ENCODE measurements at regions of chr10 and their contacts with region 1.

Region 1: DNA sequence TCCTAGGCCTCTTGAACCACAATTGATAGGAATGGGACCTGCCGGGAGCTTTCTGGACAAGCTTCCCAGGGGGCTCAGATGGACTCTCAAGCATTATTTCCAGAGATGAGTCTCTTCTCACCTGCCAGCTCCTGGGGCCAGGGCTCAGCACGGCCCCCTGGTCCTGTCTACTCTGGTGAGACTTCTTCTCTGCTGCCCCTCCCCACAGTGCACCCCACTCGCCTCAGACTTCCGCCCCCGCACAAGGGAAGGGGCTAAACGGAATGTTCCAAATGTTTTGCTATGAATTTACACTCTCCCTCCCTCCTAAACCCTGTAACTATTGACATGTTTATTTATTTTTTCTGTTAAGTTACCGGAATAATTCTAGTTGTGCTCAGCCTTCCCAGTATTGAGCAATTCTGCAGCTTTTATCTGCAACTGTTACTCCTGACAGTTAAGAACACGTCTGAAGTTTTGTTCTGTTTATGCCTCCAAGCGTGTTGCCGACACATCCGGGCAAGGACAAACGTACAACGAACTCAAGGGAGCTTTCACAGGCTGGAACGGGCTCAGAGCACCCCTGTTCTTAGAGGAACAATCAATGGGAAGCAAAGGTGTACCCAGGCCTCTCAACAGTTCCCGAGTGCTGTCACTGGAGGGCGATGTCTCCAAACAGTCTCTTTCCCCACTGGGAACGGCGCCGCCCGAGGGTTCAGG is 55.2 kb downstream of the FHIP2A start:
- DNase-seq: peak; percentile 74 to 76
- H3K4me3 ChIP-seq: no peak overlapping the region
- H3K4me3 Mint-ChIP-seq: no peak overlapping the region
- H3K27ac Mint-ChIP-seq: no peak overlapping the region
- H3K4me1 ChIP-seq: no peaks in the 10 kb centered on the region
- H3K4me1 Mint-ChIP-seq: no peaks in the 10 kb centered on the region
- H3K27me3 ChIP-seq: no peaks in the 10 kb centered on the region
- H3K27me3 Mint-ChIP-seq: peaks cover 5% of the 10 kb centered on the region
- CTCF ChIP-seq: peak; percentile 91 to 93

Region 2: GRCh38 chr10:114831186-114831867 is 45.4 kb before region 1 on chr10:
- CTCF ChIA-PET with region 1: no interaction called
- POLR2A ChIA-PET with region 1: no interaction called
- intact Hi-C with region 1: no loop called
- DNase-seq: no peak
- H3K4me3 ChIP-seq: no peak overlapping the region
- H3K4me3 Mint-ChIP-seq: no peak overlapping the region
- H3K27ac Mint-ChIP-seq: no peak overlapping the region
- H3K4me1 ChIP-seq: peaks cover 13% of the 10 kb centered on the region
- H3K4me1 Mint-ChIP-seq: peaks cover 17% of the 10 kb centered on the region
- H3K27me3 ChIP-seq: no peaks in the 10 kb centered on the region
- H3K27me3 Mint-ChIP-seq: no peaks in the 10 kb centered on the region
- CTCF ChIP-seq: no peak

Region 3: DNA sequence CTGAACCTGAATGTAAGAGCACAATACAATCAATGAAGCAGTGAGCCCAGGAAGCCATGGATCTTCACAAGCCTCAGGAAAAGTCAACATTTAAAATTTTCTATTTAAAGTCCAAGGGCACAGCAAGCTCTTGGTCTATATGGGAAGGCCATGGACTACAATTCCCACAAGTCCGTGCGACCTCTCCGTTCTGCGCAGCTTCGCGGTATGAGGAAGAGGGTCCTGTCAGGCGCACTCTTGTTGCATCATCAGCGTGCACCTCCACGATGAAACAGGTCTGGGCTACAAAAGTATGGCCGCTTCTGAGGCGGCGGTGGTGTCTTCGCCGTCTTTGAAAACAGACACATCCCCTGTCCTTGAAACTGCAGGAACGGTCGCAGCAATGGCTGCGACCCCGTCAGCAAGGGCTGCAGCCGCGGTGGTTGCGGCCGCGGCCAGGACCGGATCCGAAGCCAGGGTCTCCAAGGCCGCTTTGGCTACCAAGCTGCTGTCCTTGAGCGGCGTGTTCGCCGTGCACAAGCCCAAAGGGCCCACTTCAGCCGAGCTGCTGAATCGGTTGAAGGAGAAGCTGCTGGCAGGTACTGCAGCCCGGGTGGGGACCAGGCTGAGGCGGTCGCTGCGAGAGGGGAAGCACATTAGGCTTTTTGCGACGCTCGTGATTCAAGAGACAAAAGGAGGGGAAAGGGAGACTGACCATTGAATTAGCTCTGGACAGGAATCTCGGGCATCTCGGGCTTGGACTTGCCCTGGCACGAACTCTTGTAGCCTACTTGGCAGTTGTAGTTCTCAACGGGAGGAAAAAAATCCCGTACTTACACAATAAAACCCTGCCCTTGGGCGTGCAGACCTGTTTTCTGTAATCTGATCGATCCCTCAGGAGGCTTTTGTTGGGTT is 61.5 kb after region 1 on chr10 and contains the start of gene TRUB1:
- CTCF ChIA-PET with region 1: interaction called, 3 read pairs
- POLR2A ChIA-PET with region 1: interaction called, 5 read pairs
- intact Hi-C with region 1: loop called (anchors 2 kb)
- DNase-seq: peak; percentile 90 to 95
- H3K4me3 ChIP-seq: peak within 1 kb of the TSS; percentile 92
- H3K4me3 Mint-ChIP-seq: peak within 1 kb of the TSS; percentile 95
- H3K27ac Mint-ChIP-seq: peak within 1 kb of the TSS; percentile 98
- H3K4me1 ChIP-seq: peaks cover 7% of the 10 kb centered on the region
- H3K4me1 Mint-ChIP-seq: no peaks in the 10 kb centered on the region
- H3K27me3 ChIP-seq: no peaks in the 10 kb centered on the region
- H3K27me3 Mint-ChIP-seq: no peaks in the 10 kb centered on the region
- CTCF ChIP-seq: no peak
- total RNA-seq, gene TRUB1: 18.9 and 22.0 TPM in 2 replicates

Region 4: DNA sequence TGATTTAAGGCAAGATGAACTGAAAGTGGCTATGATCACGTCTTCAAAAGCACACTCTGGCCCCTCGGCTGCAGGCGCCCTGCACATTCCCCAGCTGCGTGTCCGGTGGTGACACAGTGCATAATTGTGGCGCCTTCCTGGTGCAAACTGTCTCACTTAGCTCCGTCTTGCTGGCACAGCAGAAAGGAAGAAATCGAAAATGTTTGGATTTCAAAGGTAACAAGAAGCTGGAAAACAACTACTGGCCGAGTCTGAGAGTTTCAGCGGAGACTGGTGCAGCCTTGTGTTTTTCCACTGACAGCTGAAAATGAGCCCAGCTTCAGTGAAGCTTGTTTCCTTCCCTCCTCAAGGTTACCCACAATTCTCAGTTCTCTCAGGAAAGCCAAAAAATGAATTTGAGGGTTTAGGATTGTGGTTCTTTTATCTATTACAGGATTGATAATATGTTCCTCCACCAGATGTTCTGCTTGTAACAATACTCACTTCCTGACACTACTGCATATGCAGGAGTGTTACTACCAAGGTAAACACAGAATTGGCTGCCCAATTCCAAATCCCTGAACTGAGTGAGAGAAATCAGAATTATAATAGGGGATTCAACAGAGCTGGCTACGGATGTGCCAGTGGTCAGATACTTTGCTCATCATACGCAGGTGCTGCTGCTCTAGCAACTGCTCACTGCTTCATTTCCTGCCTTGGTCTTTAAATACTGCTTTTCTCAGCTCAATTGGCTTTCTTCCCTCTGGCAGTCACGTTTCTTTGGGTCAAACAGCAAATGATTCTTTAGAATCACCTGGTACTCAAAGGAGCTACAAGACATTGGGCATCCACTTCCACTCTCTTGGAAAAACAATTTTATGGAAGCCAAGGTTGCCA is 125.0 kb after region 1 on chr10:
- CTCF ChIA-PET with region 1: interaction called, 3 read pairs
- POLR2A ChIA-PET with region 1: no interaction called
- intact Hi-C with region 1: loop called (anchors 5 kb)
- DNase-seq: no peak
- H3K4me3 ChIP-seq: no peak overlapping the region
- H3K4me3 Mint-ChIP-seq: no peak overlapping the region
- H3K27ac Mint-ChIP-seq: no peak overlapping the region
- H3K4me1 ChIP-seq: no peaks in the 10 kb centered on the region
- H3K4me1 Mint-ChIP-seq: no peaks in the 10 kb centered on the region
- H3K27me3 ChIP-seq: no peaks in the 10 kb centered on the region
- H3K27me3 Mint-ChIP-seq: peaks cover 3% of the 10 kb centered on the region
- CTCF ChIP-seq: no peak

Region 5: DNA sequence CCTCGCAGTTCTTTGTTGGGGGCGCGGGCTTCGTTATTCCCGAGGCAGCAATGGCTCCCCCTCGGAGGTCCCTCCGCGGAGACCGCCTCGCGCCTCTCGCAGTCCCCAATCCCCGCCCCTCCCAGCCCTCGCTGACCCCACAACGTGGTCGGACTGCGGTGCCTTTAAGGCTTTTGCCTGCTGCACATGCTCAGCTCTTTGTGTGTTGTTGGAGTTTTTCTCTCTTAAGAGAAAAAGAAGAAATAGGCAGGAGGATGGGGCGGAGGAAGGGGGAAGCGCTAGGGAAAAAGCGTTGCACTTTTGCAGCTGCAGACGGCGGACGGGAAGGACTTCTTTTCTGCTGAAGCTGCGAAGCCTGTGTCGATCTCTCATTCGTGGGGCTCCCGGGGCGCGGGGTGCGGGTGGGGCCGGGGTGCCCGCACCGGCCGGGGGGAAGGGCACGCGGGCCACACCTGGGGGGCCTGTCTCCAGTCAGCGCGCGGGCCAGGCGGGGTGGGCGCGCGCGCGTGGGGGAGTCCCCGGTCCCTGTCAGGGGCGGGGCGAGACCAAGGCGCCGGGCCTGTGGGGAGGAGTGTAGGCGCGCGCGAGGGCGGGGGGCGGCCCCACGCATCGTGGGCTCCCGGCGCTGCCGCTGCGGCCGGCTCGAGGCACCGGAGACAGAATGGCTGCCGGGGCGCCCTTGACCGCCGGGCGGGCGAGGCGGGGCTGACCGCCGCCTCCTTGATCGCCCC is 216.0 kb after region 1 on chr10:
- CTCF ChIA-PET with region 1: no interaction called
- POLR2A ChIA-PET with region 1: no interaction called
- intact Hi-C with region 1: loop called (anchors 10 kb)
- DNase-seq: peak in 1 of 2 experiments; percentile 16
- H3K4me3 ChIP-seq: peak overlapping the region; percentile 57
- H3K4me3 Mint-ChIP-seq: peak overlapping the region; percentile 77
- H3K27ac Mint-ChIP-seq: no peak overlapping the region
- H3K4me1 ChIP-seq: no peaks in the 10 kb centered on the region
- H3K4me1 Mint-ChIP-seq: no peaks in the 10 kb centered on the region
- H3K27me3 ChIP-seq: peaks cover 1% of the 10 kb centered on the region
- H3K27me3 Mint-ChIP-seq: peaks cover 46% of the 10 kb centered on the region
- CTCF ChIP-seq: no peak

Region 6: DNA sequence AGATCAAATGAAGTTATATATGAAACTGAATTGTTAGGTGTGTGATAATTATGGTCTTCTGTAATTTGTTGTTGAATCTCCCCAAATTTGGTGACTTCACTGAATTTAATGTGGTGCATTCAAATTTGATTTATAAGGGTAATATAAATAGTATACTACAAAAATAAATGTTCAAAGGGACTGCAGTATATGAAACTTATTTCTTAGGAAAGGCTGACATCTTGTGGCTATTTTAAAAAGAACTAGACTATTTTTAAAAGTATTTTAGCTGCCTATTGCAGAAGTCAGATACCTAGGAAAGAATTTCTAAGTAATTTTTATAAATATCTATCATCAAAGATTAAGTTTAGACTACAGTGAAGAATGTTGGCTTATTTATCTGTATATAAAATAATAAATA is 253.0 kb after region 1 on chr10:
- CTCF ChIA-PET with region 1: interaction called, 16 read pairs
- POLR2A ChIA-PET with region 1: interaction called, 3 read pairs
- intact Hi-C with region 1: loop called (anchors 1 kb)
- DNase-seq: peak in 1 of 2 experiments; percentile 3
- H3K4me3 ChIP-seq: no peak overlapping the region
- H3K4me3 Mint-ChIP-seq: no peak overlapping the region
- H3K27ac Mint-ChIP-seq: no peak overlapping the region
- H3K4me1 ChIP-seq: no peaks in the 10 kb centered on the region
- H3K4me1 Mint-ChIP-seq: no peaks in the 10 kb centered on the region
- H3K27me3 ChIP-seq: no peaks in the 10 kb centered on the region
- H3K27me3 Mint-ChIP-seq: peaks cover 5% of the 10 kb centered on the region
- CTCF ChIP-seq: no peak

Measured in Caco-2 (cell line).